ENCODE measurements at regions of chr11 and their contacts with region 1.

Region 1: DNA sequence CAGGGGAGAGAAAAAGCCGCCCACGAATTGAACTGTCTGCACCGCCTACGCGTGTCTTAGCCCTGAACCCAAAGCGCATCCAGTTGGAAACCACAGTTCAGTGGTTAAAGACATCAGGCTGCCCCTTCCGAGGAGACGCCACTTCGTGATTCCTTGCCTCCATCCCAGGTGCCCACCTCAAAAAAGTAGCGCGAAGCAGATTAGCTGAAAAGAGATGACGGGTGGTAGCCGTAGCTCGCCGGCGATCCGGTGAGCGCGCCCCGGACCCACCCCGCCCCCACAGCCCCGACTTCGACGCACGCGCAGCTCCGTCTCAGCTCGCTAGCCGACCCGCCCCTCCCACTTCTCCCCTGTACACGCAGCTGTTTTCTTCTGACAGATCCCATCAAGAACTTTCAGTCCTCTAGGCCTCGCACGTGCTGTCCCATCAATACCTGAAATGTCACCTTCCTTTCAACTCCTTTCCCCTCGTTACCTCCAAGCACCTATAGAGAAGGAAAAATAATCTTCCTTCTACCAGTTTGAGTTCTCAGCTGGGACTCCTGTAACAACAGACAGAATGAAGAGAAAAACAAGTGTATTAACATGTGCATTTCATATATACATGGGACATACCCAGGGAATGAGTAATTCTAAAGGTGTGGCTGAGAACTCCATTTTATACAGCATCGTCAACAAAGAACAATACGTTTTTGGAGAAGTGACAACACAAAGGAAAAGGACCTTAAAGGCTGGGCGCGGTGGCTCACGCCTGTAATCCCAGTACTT is 49.5 kb downstream of the OR4D9 start:
- DNase-seq: peak; percentile 88
- ATAC-seq: peak; percentile 88 to 90
- H3K4me3 ChIP-seq: peak overlapping the region; percentile 83 to 91 (median 84)
- H3K27ac ChIP-seq: peak overlapping the region; percentile 85 to 88 (median 86)
- H3K4me1 ChIP-seq: peaks cover 6 to 11% of the 10 kb centered on the region in 2 donors
- H3K27me3 ChIP-seq: no peaks in the 10 kb centered on the region
- CTCF ChIP-seq: no peak
- POLR2A ChIP-seq: peak; percentile 39 to 46

Region 2: GRCh38 chr11:59550368-59550841 is 10.5 kb before region 1 on chr11:
- in situ Hi-C with region 1: no loop called
- intact Hi-C with region 1: loop called (anchors 1 kb)
- DNase-seq: peak; percentile 50 to 67
- ATAC-seq: peak; percentile 71 to 73
- H3K4me3 ChIP-seq: peak overlapping the region; percentile 62 to 75 (median 67)
- H3K27ac ChIP-seq: peak overlapping the region; percentile 73 to 84 (median 78)
- H3K4me1 ChIP-seq: peaks cover 4 to 10% of the 10 kb centered on the region in 2 donors
- H3K27me3 ChIP-seq: no peaks in the 10 kb centered on the region
- CTCF ChIP-seq: peak; percentile 30 to 63 (median 55)
- POLR2A ChIP-seq: no peak

Region 3: DNA sequence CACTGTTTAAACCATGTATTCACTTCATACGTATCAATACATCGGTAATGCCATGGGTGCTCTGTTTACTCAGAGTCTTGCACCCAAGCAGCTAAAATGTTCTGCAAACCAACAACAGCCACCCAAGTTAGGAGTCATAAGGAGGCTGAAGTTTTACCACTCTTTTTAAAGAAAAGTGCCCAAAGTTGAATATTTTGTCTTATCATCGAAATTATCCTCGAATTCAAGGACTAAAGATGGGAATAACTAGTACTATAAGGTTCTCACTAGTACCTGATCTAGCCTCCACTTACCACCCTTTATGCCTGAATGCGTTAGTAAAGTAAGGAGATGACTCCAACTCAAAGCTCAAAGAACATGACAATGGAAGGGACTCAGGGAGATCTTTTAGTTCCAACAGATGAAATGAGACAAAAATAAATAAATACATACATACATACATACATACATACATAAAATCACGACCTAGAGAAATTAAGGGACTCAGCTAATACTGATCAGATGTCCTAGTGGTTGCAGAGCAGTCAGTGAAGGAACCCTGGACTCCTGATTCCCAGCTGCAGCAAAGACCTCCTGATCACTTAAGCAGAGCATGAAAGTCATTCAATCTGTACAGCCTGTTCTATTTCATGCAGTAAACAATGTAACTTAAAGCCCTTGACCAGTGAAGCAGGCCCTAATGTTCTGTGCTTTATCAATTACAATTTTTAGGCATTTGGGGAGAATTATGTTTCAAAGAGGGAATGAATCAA is 47.0 kb after region 1 on chr11:
- in situ Hi-C with region 1: no loop called
- intact Hi-C with region 1: loop called (anchors 2 kb)
- DNase-seq: peak in 1 of 2 donors; percentile 21
- ATAC-seq: peak; percentile 37 to 57
- H3K4me3 ChIP-seq: peak overlapping the region in 1 of 4 donors; percentile 14
- H3K27ac ChIP-seq: peak overlapping the region; percentile 85 to 96 (median 92)
- H3K4me1 ChIP-seq: peaks cover 78 to 87% of the 10 kb centered on the region in 2 donors
- H3K27me3 ChIP-seq: no peaks in the 10 kb centered on the region
- CTCF ChIP-seq: no peak
- POLR2A ChIP-seq: peak in 1 of 2 donors; percentile 60